Right ventricle myocardium superior (tissue), 1 donor: ENCODE measurements at regions of chr4 and their contacts with region 1.

Region 1: DNA sequence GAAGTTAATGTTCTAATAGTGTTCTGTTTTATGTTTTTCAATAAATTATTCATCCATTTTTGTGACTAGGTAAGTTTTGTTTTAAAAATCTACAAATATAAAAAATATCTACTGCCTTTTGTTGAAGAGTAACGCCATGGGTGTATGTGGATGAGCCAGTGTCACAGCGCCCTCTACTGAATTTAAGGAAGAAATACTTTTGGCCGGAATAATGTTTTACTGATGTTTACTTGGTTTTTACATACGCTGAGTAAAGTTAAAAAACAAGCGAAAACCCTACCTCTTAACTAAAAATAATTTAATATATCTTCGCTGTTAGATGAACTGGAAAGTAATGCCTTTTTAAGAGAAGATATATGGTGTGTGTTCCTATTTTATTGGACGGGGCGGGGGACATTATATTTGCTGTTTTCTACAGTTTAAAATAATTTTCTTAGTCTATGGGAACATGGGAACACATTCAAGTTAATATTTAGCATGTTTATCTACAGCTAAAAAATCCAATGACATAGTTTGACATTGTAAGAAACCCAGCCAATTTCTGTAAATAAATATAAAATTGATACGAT is 86.1 kb downstream of the CPE start:
- DNase-seq: no peak
- ATAC-seq: peak; percentile 73

Region 2: DNA sequence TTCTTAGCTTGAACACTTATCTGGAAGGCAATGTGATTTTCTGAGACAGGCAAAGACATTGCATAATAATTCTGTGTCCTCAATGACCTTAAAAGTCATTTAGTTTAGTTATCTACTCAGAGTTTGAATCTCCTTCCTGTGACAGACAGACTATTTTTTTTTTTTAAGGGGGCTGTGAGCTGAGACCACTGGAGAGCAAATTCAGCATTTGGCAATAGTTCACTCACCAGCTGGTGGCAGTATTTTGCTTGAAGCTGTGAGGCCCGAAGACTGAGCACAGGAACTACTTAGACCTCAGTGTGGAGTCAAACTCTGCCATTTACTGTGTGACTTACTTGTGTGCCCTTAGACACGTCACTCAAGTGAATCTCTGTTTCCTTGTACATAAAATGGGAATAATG is 109.0 kb before region 1 on chr4:
- intact Hi-C with region 1: loop called (anchors 5 kb)
- DNase-seq: no peak
- ATAC-seq: peak; percentile 66

Region 3: DNA sequence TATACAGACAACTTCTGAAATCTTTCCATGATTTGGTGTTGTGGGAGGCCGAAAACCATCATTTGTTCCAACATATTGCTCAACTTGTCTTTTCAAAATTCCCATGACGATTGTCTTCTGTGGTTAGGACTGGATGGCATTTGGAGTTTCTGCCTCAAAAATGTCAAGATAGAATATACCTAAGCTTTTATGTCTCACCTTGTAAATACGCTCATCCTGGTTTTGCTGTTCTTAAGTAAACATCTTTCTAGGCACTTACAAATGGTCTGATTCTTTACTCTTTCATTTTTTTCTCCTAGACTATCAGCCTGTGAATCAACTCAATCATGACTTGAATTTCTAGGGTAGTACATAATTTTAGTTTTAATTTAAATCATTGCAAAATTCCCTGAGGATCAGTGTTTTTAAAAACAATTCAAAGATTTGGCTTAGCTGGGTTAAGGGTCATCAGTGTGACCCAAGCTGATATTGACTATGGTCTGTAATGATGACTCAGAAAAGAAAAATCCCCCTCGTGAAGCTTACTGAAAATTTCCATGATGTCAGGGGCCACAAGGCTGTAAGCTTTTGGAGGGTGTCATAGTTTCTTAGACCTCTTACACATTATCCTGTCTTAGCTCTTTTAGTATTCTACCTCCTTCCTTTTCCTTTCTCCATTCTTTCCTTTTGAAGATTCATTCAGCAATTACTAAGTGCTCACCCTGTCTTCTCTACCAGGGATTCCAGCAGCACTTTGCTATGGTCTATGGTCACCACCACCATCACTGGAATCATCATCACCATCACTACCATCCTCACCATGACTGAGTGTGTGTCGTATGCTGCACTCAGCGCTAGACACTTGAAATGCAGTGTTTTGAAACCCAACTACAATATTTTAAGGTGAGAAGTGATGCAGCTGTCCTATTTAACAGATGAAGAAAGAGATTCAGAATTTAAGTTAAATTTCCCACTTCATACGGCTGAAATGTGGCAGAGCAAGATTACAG is 38.3 kb after region 1 on chr4:
- intact Hi-C with region 1: no loop called
- DNase-seq: no peak
- ATAC-seq: peak; percentile 48

Region 4: DNA sequence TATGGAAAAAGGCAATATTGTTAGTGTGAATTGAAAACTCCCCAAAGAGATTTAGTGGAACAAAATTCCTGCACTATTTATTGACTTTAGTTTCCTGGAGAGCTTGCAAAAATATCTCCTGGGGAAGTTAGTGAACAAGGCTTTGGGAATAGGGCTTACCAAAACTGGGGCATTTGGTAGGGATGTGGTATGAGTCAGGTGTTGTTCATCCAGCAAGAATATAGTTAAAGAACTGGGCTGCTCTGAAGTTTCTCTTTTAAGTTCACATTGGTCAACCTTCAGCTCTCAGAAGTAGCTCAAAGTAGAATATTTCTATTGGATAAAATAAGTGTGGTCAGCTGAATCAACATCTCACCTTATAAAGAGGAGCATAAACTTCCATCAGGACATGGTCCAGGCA is 99.0 kb after region 1 on chr4:
- intact Hi-C with region 1: no loop called
- DNase-seq: no peak
- ATAC-seq: no peak